ENCODE measurements at regions of chr1 and their contacts with region 1.

Region 1: DNA sequence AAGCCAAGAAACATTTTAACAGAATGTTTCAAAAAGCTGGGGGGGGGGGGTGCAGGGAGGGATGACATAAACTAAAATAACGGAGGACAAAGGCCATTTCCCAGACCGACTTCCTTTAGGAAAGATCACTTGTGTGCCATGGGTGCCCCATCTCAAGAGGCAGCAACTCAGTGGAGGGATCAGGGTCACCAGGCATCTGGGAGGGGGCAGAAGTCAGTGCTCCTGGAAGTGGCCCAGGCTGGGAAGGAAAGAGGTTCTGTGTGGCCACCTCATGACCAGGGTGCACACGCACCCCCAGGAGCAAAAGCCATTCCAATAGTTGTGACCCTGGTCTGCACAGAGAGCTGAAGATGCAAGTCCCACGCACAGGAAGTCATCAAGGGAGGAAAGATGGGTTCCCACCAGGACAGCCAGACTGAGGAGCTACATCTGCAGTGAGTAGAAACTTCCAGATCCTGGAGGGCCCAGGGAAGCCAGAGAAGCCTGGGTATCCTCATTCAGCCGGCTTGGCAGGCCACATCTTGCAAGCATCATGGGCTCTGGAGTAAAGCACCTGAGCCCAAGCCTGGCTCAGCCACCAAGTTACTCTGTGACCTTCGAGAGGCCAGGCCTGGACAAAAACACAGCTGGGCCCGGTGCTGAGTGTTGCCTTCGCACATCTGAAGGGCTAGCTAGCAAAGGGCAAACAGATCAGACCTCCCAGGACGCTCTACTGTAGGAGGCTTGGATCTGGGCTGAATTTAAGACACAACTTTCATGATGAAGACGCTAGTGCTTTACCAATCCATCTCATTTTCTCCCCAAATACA is 36.0 kb downstream of the NPHP4 start:
- DNase-seq: no peak
- H3K4me3 ChIP-seq: no peak overlapping the region
- H3K27ac ChIP-seq: no peak overlapping the region
- H3K4me1 ChIP-seq: no peaks in the 10 kb centered on the region
- H3K27me3 ChIP-seq: no peaks in the 10 kb centered on the region
- CTCF ChIP-seq: no peak

Region 2: GRCh38 chr1:5551274-5551975 is 404.8 kb before region 1 on chr1:
- CTCF ChIA-PET with region 1: no interaction called
- POLR2A ChIA-PET with region 1: no interaction called
- intact Hi-C with region 1: no loop called
- DNase-seq: peak; percentile 3
- H3K4me3 ChIP-seq: no peak overlapping the region
- H3K27ac ChIP-seq: no peak overlapping the region
- H3K4me1 ChIP-seq: no peaks in the 10 kb centered on the region
- H3K27me3 ChIP-seq: no peaks in the 10 kb centered on the region
- CTCF ChIP-seq: no peak

Region 3: GRCh38 chr1:5915587-5916571 is 40.3 kb before region 1 on chr1:
- CTCF ChIA-PET with region 1: interaction called, 4 read pairs
- POLR2A ChIA-PET with region 1: interaction called, 12 read pairs
- intact Hi-C with region 1: no loop called
- DNase-seq: peak; percentile 74
- H3K4me3 ChIP-seq: no peak overlapping the region
- H3K27ac ChIP-seq: no peak overlapping the region
- H3K4me1 ChIP-seq: peaks cover 32% of the 10 kb centered on the region
- H3K27me3 ChIP-seq: no peaks in the 10 kb centered on the region
- CTCF ChIP-seq: peak; percentile 87